GM10248 (cell line): ENCODE measurements at regions of chr11 and their contacts with region 1.

Region 1: DNA sequence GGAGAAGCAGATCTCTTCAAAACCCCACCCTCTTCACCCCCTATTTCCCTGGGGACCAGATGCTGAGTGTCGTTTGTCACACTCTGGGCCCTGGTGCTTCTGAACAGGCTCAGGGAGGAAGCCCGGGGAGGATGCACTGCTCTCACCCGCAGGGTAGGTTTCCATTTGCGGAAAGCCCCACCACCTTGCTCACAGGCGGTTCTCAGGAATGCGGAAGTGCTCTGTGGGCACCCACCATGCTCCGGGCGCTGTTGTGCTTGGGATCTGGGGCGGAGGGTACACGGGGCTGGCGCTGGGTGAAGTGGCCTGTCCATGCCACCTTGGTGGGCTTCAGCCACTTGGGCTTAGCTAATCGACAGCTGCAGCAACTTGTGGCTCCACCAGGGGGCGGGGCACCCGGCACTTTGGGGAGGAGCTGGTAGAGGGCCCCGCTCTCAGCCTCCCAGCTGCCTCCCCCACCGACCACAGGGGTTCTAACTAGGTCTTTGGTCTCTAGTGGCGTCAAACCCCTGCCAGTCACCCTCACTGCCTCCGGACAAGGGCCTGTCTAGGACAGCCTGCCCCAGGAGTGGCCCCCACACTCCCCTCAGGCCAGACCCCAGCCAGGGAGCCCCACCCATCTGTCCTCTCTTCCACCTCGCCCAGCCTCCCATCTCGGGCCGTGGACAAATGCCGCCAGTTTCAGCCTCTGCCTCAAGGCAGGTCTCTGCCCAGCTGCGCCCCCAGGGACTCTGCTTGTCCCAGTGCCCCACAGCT is 7.4 kb downstream of the NDUFV1 start:
- DNase-seq: peak; percentile 87
- CTCF ChIP-seq: peak; percentile 40

Region 2: GRCh38 chr11:67656278-67656922 is 42.3 kb after region 1 on chr11:
- CTCF ChIA-PET with region 1: interaction called, 13 read pairs
- POLR2A ChIA-PET with region 1: no interaction called
- DNase-seq: no peak
- CTCF ChIP-seq: no peak

Region 3: GRCh38 chr11:67667515-67668191 is 53.5 kb after region 1 on chr11:
- CTCF ChIA-PET with region 1: no interaction called
- POLR2A ChIA-PET with region 1: no interaction called
- DNase-seq: peak; percentile 30
- CTCF ChIP-seq: no peak